CD4-positive, alpha-beta T cell (primary cell): ENCODE measurements at regions of chr4 and their contacts with region 1.

Region 1: DNA sequence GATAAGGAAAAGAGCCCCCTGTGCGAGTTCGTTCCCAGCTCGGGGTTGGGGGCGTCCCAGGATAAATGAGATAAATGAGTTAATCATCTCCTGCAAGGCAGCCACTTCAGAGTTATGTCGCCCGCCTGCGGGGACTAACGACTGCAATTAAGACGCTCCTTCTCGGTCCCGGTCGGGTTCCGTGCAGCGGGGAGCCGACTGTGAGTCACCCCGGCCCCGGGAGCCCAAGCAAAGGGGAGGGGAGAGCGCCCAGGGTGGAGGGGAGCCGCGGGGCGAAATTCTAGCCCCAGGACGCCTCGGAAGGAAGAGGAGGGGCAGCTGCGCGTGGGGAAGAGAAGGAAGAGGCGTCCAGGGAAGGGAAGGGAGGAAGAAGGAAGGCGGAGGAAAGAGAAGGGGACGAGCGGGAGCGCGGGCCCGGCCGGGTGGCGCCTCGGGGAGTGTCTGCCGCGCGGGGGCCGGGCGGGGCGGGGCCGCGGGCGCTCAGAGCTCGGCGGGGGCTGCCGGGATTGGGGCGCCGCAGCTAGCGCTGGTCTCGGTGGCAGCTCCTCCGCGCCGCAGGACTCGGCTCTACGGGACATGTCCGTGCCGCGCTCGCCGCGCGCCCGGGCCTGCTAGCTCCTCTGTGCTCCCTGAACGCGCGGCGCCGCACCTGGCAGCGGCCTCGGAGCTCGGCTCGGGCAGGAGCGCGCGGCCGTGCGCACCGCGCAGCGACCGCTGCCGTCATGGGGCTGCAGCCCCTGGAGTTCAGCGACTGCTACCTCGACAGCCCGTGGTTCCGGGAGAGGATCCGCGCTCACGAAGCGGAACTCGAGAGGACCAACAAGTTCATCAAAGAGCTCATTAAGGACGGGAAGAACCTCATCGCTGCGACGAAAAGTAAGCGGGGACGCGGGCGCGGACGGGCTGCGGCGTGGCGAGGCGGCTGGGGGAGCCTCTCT is at the start of gene ARHGAP10:
- DNase-seq: peak; percentile 36 to 84 (median 62)
- ATAC-seq: peak; percentile 63
- H3K4me3 ChIP-seq: peak within 1 kb of the TSS; percentile 83
- H3K4me3 Mint-ChIP-seq: peak within 1 kb of the TSS; percentile 98
- H3K27ac ChIP-seq: peak within 1 kb of the TSS in 1 of 2 donors; percentile 65
- H3K27ac Mint-ChIP-seq: peak within 1 kb of the TSS; percentile 88
- H3K4me1 ChIP-seq: peaks cover 28% of the 10 kb centered on the region
- H3K4me1 Mint-ChIP-seq: peaks cover 37% of the 10 kb centered on the region
- H3K27me3 ChIP-seq: no peaks in the 10 kb centered on the region
- H3K27me3 Mint-ChIP-seq: no peaks in the 10 kb centered on the region
- CTCF ChIP-seq: no peak
- total RNA-seq, gene ARHGAP10: 5.6 to 5.7 TPM

Region 2: GRCh38 chr4:147578051-147578476 is 153.8 kb before region 1 on chr4:
- CTCF ChIA-PET with region 1: no interaction called
- POLR2A ChIA-PET with region 1: no interaction called
- intact Hi-C with region 1: no loop called
- DNase-seq: no peak
- ATAC-seq: no peak
- H3K4me3 ChIP-seq: no peak overlapping the region
- H3K4me3 Mint-ChIP-seq: no peak overlapping the region
- H3K27ac ChIP-seq: no peak overlapping the region
- H3K27ac Mint-ChIP-seq: no peak overlapping the region
- H3K4me1 ChIP-seq: no peaks in the 10 kb centered on the region
- H3K4me1 Mint-ChIP-seq: no peaks in the 10 kb centered on the region
- H3K27me3 ChIP-seq: no peaks in the 10 kb centered on the region
- H3K27me3 Mint-ChIP-seq: peaks cover 9% of the 10 kb centered on the region
- CTCF ChIP-seq: no peak

Region 3: GRCh38 chr4:147617173-147617840 is 114.5 kb before region 1 on chr4 and contains the start of gene TMEM184C:
- CTCF ChIA-PET with region 1: no interaction called
- POLR2A ChIA-PET with region 1: interaction called, 30 read pairs
- intact Hi-C with region 1: loop called (anchors 2 to 5 kb)
- DNase-seq: peak; percentile 96 to 99 (median 98)
- ATAC-seq: peak; percentile 95
- H3K4me3 ChIP-seq: peak within 1 kb of the TSS; percentile 78
- H3K4me3 Mint-ChIP-seq: peak within 1 kb of the TSS; percentile 89
- H3K27ac ChIP-seq: peak within 1 kb of the TSS; percentile 80 to 90
- H3K27ac Mint-ChIP-seq: peak within 1 kb of the TSS; percentile 92
- H3K4me1 ChIP-seq: peaks cover 29% of the 10 kb centered on the region
- H3K4me1 Mint-ChIP-seq: peaks cover 38% of the 10 kb centered on the region
- H3K27me3 ChIP-seq: no peaks in the 10 kb centered on the region
- H3K27me3 Mint-ChIP-seq: no peaks in the 10 kb centered on the region
- CTCF ChIP-seq: no peak
- total RNA-seq, gene TMEM184C: 10.0 to 10.1 TPM

Region 4: GRCh38 chr4:147683717-147684700 is 47.8 kb before region 1 on chr4 and contains the start of gene PRMT9:
- CTCF ChIA-PET with region 1: interaction called, 4 read pairs
- POLR2A ChIA-PET with region 1: interaction called, 55 read pairs
- intact Hi-C with region 1: loop called in 1 of 2 experiments (anchors 2 kb)
- DNase-seq: peak; percentile 69 to 93 (median 84)
- ATAC-seq: peak; percentile 95
- H3K4me3 ChIP-seq: peak within 1 kb of the TSS; percentile 91
- H3K4me3 Mint-ChIP-seq: peak within 1 kb of the TSS; percentile 98
- H3K27ac ChIP-seq: peak within 1 kb of the TSS; percentile 79 to 93
- H3K27ac Mint-ChIP-seq: peak within 1 kb of the TSS; percentile 100
- H3K4me1 ChIP-seq: peaks cover 12% of the 10 kb centered on the region
- H3K4me1 Mint-ChIP-seq: peaks cover 42% of the 10 kb centered on the region
- H3K27me3 ChIP-seq: no peaks in the 10 kb centered on the region
- H3K27me3 Mint-ChIP-seq: peaks cover 15% of the 10 kb centered on the region
- CTCF ChIP-seq: no peak
- total RNA-seq, gene PRMT9: 21.0 to 21.1 TPM

Region 5: GRCh38 chr4:147707865-147708672 is 23.8 kb before region 1 on chr4:
- CTCF ChIA-PET with region 1: interaction called, 3 read pairs
- POLR2A ChIA-PET with region 1: interaction called, 3 read pairs
- intact Hi-C with region 1: loop called in 1 of 2 experiments (anchors 2 kb)
- DNase-seq: peak; percentile 23 to 77 (median 40)
- ATAC-seq: peak; percentile 71
- H3K4me3 ChIP-seq: no peak overlapping the region
- H3K4me3 Mint-ChIP-seq: no peak overlapping the region
- H3K27ac ChIP-seq: no peak overlapping the region
- H3K27ac Mint-ChIP-seq: no peak overlapping the region
- H3K4me1 ChIP-seq: no peaks in the 10 kb centered on the region
- H3K4me1 Mint-ChIP-seq: no peaks in the 10 kb centered on the region
- H3K27me3 ChIP-seq: no peaks in the 10 kb centered on the region
- H3K27me3 Mint-ChIP-seq: no peaks in the 10 kb centered on the region
- CTCF ChIP-seq: peak; percentile 97

Region 6: DNA sequence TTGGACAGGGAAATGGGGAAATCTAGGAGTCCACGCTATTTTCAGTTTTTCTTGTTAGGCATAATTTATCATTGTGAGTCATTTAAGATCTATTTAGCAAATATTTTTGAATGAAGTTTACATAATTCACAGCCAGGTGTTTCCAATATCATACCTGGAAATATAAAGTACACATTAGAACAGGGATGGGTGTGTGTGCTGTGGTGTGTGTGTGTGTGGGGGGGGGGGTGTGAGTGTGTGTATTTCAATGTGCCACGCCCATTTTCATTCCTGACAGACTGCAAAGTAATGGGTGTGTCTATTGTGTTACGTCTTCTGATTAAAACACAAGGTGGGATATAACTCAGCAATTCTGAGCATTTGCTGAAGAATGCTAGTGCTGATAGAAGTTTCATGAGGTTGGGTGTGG is 33.3 kb after region 1 on chr4:
- CTCF ChIA-PET with region 1: no interaction called
- POLR2A ChIA-PET with region 1: no interaction called
- intact Hi-C with region 1: loop called in 1 of 2 experiments (anchors 1 kb)
- DNase-seq: no peak
- ATAC-seq: no peak
- H3K4me3 ChIP-seq: no peak overlapping the region
- H3K4me3 Mint-ChIP-seq: no peak overlapping the region
- H3K27ac ChIP-seq: no peak overlapping the region
- H3K27ac Mint-ChIP-seq: no peak overlapping the region
- H3K4me1 ChIP-seq: no peaks in the 10 kb centered on the region
- H3K4me1 Mint-ChIP-seq: no peaks in the 10 kb centered on the region
- H3K27me3 ChIP-seq: no peaks in the 10 kb centered on the region
- H3K27me3 Mint-ChIP-seq: no peaks in the 10 kb centered on the region
- CTCF ChIP-seq: no peak

Region 7: GRCh38 chr4:147793569-147794313 is 61.9 kb after region 1 on chr4:
- CTCF ChIA-PET with region 1: no interaction called
- POLR2A ChIA-PET with region 1: interaction called, 25 read pairs
- intact Hi-C with region 1: loop called in 1 of 2 experiments (anchors 5 kb)
- DNase-seq: peak in 1 of 14 experiments; percentile 27
- ATAC-seq: no peak
- H3K4me3 ChIP-seq: no peak overlapping the region
- H3K4me3 Mint-ChIP-seq: peak overlapping the region; percentile 39
- H3K27ac ChIP-seq: no peak overlapping the region
- H3K27ac Mint-ChIP-seq: peak overlapping the region; percentile 85
- H3K4me1 ChIP-seq: peaks cover 19% of the 10 kb centered on the region
- H3K4me1 Mint-ChIP-seq: peaks cover 42% of the 10 kb centered on the region
- H3K27me3 ChIP-seq: no peaks in the 10 kb centered on the region
- H3K27me3 Mint-ChIP-seq: no peaks in the 10 kb centered on the region
- CTCF ChIP-seq: no peak